ENCODE measurements at regions of chr16 and their contacts with region 1.

Region 1: GRCh38 chr16:69424053-69424934 is at the start of gene CYB5B:
- DNase-seq: peak; percentile 87 to 98
- ATAC-seq: peak; percentile 95 to 99 (median 97)
- H3K4me3 ChIP-seq: peak within 1 kb of the TSS; percentile 64
- H3K4me3 Mint-ChIP-seq: peak within 1 kb of the TSS; percentile 99
- H3K27ac ChIP-seq: peak within 1 kb of the TSS; percentile 67
- H3K27ac Mint-ChIP-seq: peak within 1 kb of the TSS; percentile 91 to 94
- H3K4me1 ChIP-seq: peaks cover 8% of the 10 kb centered on the region
- H3K4me1 Mint-ChIP-seq: peaks cover 35 to 41% of the 10 kb centered on the region in 2 donors
- H3K27me3 ChIP-seq: no peaks in the 10 kb centered on the region
- H3K27me3 Mint-ChIP-seq: no peaks in the 10 kb centered on the region
- CTCF ChIP-seq: no peak
- total RNA-seq, gene CYB5B: 73.1 to 106 (median 88.4) TPM

Region 2: DNA sequence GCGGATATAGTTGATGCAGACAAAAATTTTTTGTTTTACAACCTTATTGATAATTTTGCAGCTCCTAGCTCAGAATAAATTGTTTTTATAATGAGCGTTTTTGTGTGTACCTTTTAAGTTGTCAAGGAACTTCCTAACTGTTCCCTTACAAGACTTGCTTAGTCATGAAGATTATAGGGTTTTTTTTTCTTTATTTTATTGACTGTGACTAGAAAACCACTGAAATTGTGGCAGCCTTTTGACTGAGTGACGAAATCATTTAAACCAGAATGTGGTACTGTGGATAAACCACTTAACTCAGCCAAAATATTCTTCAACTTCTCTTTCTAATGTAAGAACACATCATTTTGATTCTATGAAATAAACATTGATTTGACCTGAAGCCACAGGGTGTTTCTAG is 153.9 kb before region 1 on chr16:
- intact Hi-C with region 1: no loop called
- DNase-seq: no peak
- ATAC-seq: no peak
- H3K4me3 ChIP-seq: no peak overlapping the region
- H3K4me3 Mint-ChIP-seq: no peak overlapping the region
- H3K27ac ChIP-seq: no peak overlapping the region
- H3K27ac Mint-ChIP-seq: no peak overlapping the region
- H3K4me1 ChIP-seq: no peaks in the 10 kb centered on the region
- H3K4me1 Mint-ChIP-seq: peaks cover 18% of the 10 kb centered on the region in 2 donors
- H3K27me3 ChIP-seq: no peaks in the 10 kb centered on the region
- H3K27me3 Mint-ChIP-seq: no peaks in the 10 kb centered on the region
- CTCF ChIP-seq: no peak

Region 3: GRCh38 chr16:69339289-69340108 is 84.8 kb before region 1 on chr16 and contains the starts of genes COG8 and NIP7:
- intact Hi-C with region 1: loop called (anchors 1 kb)
- DNase-seq: peak; percentile 89 to 97
- ATAC-seq: peak; percentile 89 to 94 (median 92)
- H3K4me3 ChIP-seq: peak within 1 kb of the TSS; percentile 88
- H3K4me3 Mint-ChIP-seq: peak within 1 kb of the TSS; percentile 100
- H3K27ac ChIP-seq: peak within 1 kb of the TSS; percentile 72
- H3K27ac Mint-ChIP-seq: peak within 1 kb of the TSS; percentile 94 to 99
- H3K4me1 ChIP-seq: peaks cover 27% of the 10 kb centered on the region
- H3K4me1 Mint-ChIP-seq: peaks cover 36 to 38% of the 10 kb centered on the region in 2 donors
- H3K27me3 ChIP-seq: no peaks in the 10 kb centered on the region
- H3K27me3 Mint-ChIP-seq: no peaks in the 10 kb centered on the region
- CTCF ChIP-seq: peak; percentile 93
- total RNA-seq, gene COG8: 26.3 to 34.6 (median 29.0) TPM
- total RNA-seq, gene NIP7: 33.7 to 41.8 (median 37.7) TPM

Region 4: DNA sequence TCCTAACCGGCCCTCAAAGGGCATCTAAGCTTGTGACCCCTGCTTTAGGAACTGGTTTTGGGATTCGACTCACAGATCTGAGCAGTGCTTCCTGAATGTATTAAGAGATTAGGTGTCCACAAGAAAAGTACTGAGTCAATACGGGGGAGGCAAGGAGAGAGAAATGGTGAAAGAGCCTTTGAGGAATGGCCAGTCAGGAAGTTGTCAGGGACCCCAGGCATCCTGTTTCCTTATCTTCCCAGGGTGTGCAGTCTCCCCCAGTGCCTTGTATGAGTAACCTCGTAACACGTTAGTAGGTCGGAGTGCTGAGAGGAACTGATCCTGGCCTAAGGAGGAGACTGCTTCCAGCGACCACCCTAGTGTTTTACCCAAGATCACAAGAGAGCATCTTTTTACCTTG is 56.3 kb before region 1 on chr16:
- intact Hi-C with region 1: no loop called
- DNase-seq: no peak
- ATAC-seq: no peak
- H3K4me3 ChIP-seq: no peak overlapping the region
- H3K4me3 Mint-ChIP-seq: no peak overlapping the region
- H3K27ac ChIP-seq: no peak overlapping the region
- H3K27ac Mint-ChIP-seq: no peak overlapping the region
- H3K4me1 ChIP-seq: no peaks in the 10 kb centered on the region
- H3K4me1 Mint-ChIP-seq: peaks cover 10 to 11% of the 10 kb centered on the region in 2 donors
- H3K27me3 ChIP-seq: no peaks in the 10 kb centered on the region
- H3K27me3 Mint-ChIP-seq: no peaks in the 10 kb centered on the region
- CTCF ChIP-seq: no peak

Region 5: DNA sequence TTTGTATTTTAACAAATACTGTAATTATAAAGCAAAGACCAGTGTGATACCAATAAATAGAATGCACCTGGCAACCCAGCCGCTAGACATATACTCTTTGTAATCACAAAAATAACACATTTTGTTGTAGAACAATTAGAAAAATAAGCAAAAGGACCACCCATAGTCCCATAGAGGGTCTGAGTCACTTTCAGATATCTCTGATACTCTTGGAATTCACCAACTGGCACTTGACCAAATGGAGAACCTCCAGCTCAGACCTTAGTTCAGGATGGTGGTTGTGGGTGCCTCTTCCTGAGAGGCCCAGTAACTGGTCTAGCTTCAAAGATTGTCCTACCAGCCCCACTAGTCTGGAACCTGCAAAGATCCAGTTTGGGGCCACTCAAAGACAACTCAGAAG is 37.7 kb before region 1 on chr16:
- intact Hi-C with region 1: loop called (anchors 5 kb)
- DNase-seq: no peak
- ATAC-seq: no peak
- H3K4me3 ChIP-seq: no peak overlapping the region
- H3K4me3 Mint-ChIP-seq: peak overlapping the region; percentile 97
- H3K27ac ChIP-seq: peak overlapping the region; percentile 68
- H3K27ac Mint-ChIP-seq: peak overlapping the region in 1 of 2 donors; percentile 89
- H3K4me1 ChIP-seq: peaks cover 10% of the 10 kb centered on the region
- H3K4me1 Mint-ChIP-seq: peaks cover 31 to 35% of the 10 kb centered on the region in 2 donors
- H3K27me3 ChIP-seq: no peaks in the 10 kb centered on the region
- H3K27me3 Mint-ChIP-seq: no peaks in the 10 kb centered on the region
- CTCF ChIP-seq: no peak

Region 6: GRCh38 chr16:69435977-69436820 is 11.9 kb after region 1 on chr16:
- intact Hi-C with region 1: no loop called
- DNase-seq: no peak
- ATAC-seq: no peak
- H3K4me3 ChIP-seq: no peak overlapping the region
- H3K4me3 Mint-ChIP-seq: no peak overlapping the region
- H3K27ac ChIP-seq: no peak overlapping the region
- H3K27ac Mint-ChIP-seq: peak overlapping the region; percentile 72 to 75
- H3K4me1 ChIP-seq: peaks cover 2% of the 10 kb centered on the region
- H3K4me1 Mint-ChIP-seq: peaks cover 63 to 67% of the 10 kb centered on the region in 2 donors
- H3K27me3 ChIP-seq: no peaks in the 10 kb centered on the region
- H3K27me3 Mint-ChIP-seq: no peaks in the 10 kb centered on the region
- CTCF ChIP-seq: no peak

Region 7: DNA sequence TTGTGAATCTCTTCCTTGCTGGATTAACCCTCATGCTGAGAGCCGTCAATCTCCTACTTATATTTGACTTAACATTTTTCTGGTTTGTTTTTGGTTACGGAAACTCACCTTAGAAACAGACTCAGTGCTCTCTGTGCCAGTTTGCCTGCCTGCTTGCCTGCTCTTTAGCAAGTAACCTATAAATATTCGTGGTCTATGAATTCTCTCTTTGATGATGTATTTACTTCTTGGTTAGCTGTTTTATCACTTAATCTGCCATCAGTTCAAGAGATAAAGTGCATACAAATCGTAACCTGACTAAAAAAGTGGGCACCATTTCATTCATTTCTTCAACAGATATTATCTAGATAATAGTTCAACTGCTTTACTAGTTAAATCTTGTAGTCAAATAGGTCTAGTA is 26.9 kb after region 1 on chr16:
- intact Hi-C with region 1: loop called (anchors 1 kb)
- DNase-seq: no peak
- ATAC-seq: no peak
- H3K4me3 ChIP-seq: no peak overlapping the region
- H3K4me3 Mint-ChIP-seq: no peak overlapping the region
- H3K27ac ChIP-seq: no peak overlapping the region
- H3K27ac Mint-ChIP-seq: peak overlapping the region; percentile 63 to 70
- H3K4me1 ChIP-seq: peaks cover 27% of the 10 kb centered on the region
- H3K4me1 Mint-ChIP-seq: peaks cover 52 to 58% of the 10 kb centered on the region in 2 donors
- H3K27me3 ChIP-seq: no peaks in the 10 kb centered on the region
- H3K27me3 Mint-ChIP-seq: no peaks in the 10 kb centered on the region
- CTCF ChIP-seq: no peak

Region 8: DNA sequence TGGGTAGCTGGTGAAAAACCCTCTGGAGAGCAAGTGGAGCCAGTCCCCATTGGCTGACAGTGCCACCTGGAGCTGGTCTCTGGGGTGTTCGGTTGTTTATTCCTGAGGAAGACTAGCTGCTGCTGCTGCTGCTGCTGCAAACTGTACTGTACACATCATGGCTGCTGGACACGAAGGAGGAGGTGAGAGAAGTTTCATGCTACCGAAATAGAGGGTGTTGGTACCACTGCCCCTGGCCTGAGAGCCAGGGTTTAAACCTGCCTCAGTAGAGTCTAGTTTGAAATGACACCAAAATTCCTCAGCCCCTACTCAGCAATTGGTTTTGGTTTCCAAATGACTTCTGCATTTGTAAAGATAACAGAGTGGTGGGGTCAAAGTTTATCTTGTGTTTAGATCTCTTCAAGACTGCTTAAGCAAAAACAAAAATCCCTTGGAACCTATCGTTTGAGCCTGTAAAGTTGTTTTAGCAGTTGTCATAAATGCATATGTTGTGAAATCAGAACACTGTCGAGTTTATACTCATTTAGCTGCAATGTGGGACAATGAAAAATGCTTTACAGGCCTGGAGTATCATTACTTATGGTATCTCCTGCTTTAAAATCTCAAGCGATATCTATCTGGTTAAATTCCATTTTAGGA is 40.9 kb after region 1 on chr16:
- intact Hi-C with region 1: loop called (anchors 2 kb)
- DNase-seq: peak; percentile 31 to 46
- ATAC-seq: peak; percentile 79 to 82 (median 82)
- H3K4me3 ChIP-seq: no peak overlapping the region
- H3K4me3 Mint-ChIP-seq: peak overlapping the region; percentile 64
- H3K27ac ChIP-seq: peak overlapping the region; percentile 53
- H3K27ac Mint-ChIP-seq: peak overlapping the region; percentile 91 to 94
- H3K4me1 ChIP-seq: peaks cover 17% of the 10 kb centered on the region
- H3K4me1 Mint-ChIP-seq: peaks cover 45 to 49% of the 10 kb centered on the region in 2 donors
- H3K27me3 ChIP-seq: no peaks in the 10 kb centered on the region
- H3K27me3 Mint-ChIP-seq: no peaks in the 10 kb centered on the region
- CTCF ChIP-seq: peak; percentile 8

Region 9: DNA sequence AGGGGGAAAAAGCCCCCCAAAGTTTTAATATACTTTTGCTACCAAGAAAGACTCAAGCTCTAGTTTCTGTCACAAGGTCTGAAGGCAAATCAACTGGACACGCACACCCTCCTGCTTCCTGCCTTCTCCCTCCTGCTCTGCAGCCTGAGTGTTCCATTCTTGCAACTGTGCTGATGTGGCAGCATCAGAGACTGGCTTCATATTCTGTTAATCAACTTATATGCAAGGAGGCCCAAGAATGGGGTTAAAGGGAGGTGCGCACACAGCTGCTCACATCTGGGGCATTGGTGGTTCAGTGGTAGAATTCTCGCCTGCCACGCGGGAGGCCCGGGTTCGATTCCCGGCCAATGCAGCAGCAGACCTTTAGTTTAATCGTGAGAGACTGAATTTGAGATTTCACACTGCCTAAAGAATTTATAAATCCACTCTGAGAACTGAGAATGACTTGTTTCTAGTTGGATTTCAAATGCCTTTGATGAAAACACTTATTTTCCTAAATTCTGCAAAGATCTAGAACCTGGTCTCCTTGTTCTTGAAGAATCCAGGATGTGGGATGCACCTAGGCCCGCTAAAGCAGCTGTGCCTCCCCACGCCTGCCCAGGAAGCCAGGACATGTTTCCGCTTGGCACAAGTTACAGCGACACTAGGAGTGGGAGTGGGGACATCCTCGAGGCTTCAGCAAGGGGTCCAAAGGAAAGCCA is 1365.1 kb after region 1 on chr16:
- intact Hi-C with region 1: no loop called
- DNase-seq: no peak
- ATAC-seq: no peak
- H3K4me3 ChIP-seq: no peak overlapping the region
- H3K4me3 Mint-ChIP-seq: no peak overlapping the region
- H3K27ac ChIP-seq: no peak overlapping the region
- H3K27ac Mint-ChIP-seq: no peak overlapping the region
- H3K4me1 ChIP-seq: no peaks in the 10 kb centered on the region
- H3K4me1 Mint-ChIP-seq: peaks cover 19 to 46% of the 10 kb centered on the region in 2 donors
- H3K27me3 ChIP-seq: no peaks in the 10 kb centered on the region
- H3K27me3 Mint-ChIP-seq: no peaks in the 10 kb centered on the region
- CTCF ChIP-seq: no peak